ENCODE measurements at regions of chr1 and their contacts with region 1.

Region 1: GRCh38 chr1:12619792-12620487 is 1.9 kb upstream of the DHRS3 start:
- DNase-seq: peak; percentile 89
- ATAC-seq: peak; percentile 51 to 57

Region 2: DNA sequence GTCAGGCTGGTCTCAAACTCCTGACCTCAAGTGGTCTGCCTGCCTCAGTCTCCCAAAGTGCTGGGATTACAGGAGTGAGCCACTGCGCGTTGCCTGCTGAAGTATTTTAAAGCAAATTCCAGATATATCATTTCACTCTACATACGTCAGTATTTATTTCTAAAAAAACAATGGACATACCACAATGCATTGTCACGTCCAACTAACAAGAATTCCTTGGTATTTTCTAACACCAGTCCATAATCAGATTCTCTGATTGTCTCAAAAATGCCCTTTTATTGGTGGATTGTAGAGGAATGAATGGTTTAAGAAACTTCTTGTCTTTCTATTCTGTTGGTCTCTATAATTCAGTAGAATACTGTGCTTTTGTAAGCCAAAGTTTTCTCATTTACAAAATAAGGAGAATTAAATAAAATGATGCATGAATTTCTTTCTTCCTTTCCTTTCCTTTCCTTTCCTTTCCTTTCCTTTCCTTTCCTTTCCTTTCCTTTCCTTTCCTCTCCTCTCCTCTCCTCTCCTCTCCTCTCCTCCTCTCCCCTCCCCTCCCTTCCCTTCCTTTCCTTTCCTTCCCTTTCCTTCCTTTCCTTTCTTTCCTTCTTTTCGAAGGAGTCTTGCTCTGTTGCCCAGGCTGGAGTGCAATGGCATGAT is 334.3 kb before region 1 on chr1:
- intact Hi-C with region 1: no loop called
- DNase-seq: no peak
- ATAC-seq: no peak

Region 3: GRCh38 chr1:12314333-12314903 is 305.5 kb before region 1 on chr1:
- intact Hi-C with region 1: loop called in 1 of 2 experiments (anchors 10 kb)
- DNase-seq: no peak
- ATAC-seq: peak; percentile 42 to 51

Region 4: GRCh38 chr1:12407050-12407961 is 212.6 kb before region 1 on chr1:
- intact Hi-C with region 1: loop called (anchors 2 to 5 kb)
- DNase-seq: no peak
- ATAC-seq: peak; percentile 38 to 80

Region 5: GRCh38 chr1:12464598-12465056 is 155.3 kb before region 1 on chr1:
- intact Hi-C with region 1: loop called in 1 of 2 experiments (anchors 5 kb)
- DNase-seq: peak; percentile 53
- ATAC-seq: peak; percentile 10 to 71

Region 6: GRCh38 chr1:12477936-12478611 is 141.9 kb before region 1 on chr1:
- intact Hi-C with region 1: loop called (anchors 5 kb)
- DNase-seq: peak; percentile 81
- ATAC-seq: peak; percentile 83 to 87

Region 7: GRCh38 chr1:12596007-12596821 is 23.7 kb before region 1 on chr1:
- intact Hi-C with region 1: loop called in 1 of 2 experiments (anchors 2 kb)
- DNase-seq: peak; percentile 94
- ATAC-seq: peak; percentile 77 to 86

Region 8: GRCh38 chr1:12608311-12608957 is 11.5 kb before region 1 on chr1:
- intact Hi-C with region 1: no loop called
- DNase-seq: no peak
- ATAC-seq: no peak